Esophagus squamous epithelium (tissue), 5 donors: ENCODE measurements at regions of chr12 and their contacts with region 1.

Region 1: GRCh38 chr12:65731771-65732170 is 92.5 kb upstream of the HMGA2 start:
- DNase-seq: no peak
- H3K4me3 ChIP-seq: no peak overlapping the region
- H3K27ac ChIP-seq: no peak overlapping the region
- H3K4me1 ChIP-seq: peaks cover 5 to 10% (median 9%) of the 10 kb centered on the region in 3 donors
- H3K27me3 ChIP-seq: peaks cover 12 to 84% (median 18%) of the 10 kb centered on the region in 4 donors
- CTCF ChIP-seq: no peak
- POLR2A ChIP-seq: no peak

Region 2: GRCh38 chr12:65585648-65586602 is 145.8 kb before region 1 on chr12:
- intact Hi-C with region 1: no loop called
- DNase-seq: no peak
- H3K4me3 ChIP-seq: no peak overlapping the region
- H3K27ac ChIP-seq: no peak overlapping the region
- H3K4me1 ChIP-seq: no peaks in the 10 kb centered on the region
- H3K27me3 ChIP-seq: no peaks in the 10 kb centered on the region
- CTCF ChIP-seq: no peak
- POLR2A ChIP-seq: no peak

Region 3: GRCh38 chr12:65800937-65801336 is 69.2 kb after region 1 on chr12:
- intact Hi-C with region 1: loop called (anchors 10 kb)
- DNase-seq: no peak
- H3K4me3 ChIP-seq: no peak overlapping the region
- H3K27ac ChIP-seq: no peak overlapping the region
- H3K4me1 ChIP-seq: no peaks in the 10 kb centered on the region
- H3K27me3 ChIP-seq: peaks cover 0 to 2% (median 0%) of the 10 kb centered on the region in 4 donors
- CTCF ChIP-seq: no peak
- POLR2A ChIP-seq: no peak

Region 4: DNA sequence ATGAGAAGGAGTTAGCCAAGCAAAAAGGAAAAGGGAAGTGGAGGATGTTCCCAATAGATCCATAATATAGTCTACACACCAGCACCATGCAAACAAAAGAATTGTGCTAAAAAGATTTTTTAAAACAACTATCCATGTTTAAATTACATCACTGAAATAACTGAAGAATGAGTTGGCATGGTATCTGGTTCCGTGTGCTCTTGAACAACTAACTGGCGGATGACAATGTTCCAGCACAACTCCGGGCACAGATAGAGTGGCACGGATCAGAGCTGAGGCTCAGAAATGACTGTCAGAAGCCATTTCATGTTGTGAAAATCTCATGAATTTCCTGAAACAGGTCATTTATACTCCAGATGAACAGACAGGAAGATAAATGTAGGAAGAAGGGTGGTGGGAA is 245.6 kb after region 1 on chr12:
- intact Hi-C with region 1: no loop called
- DNase-seq: no peak
- H3K4me3 ChIP-seq: no peak overlapping the region
- H3K27ac ChIP-seq: no peak overlapping the region
- H3K4me1 ChIP-seq: no peaks in the 10 kb centered on the region
- H3K27me3 ChIP-seq: no peaks in the 10 kb centered on the region
- CTCF ChIP-seq: no peak
- POLR2A ChIP-seq: no peak